Cardiac septum (tissue), 1 donor: ENCODE measurements at regions of chr4 and their contacts with region 1.

Region 1: DNA sequence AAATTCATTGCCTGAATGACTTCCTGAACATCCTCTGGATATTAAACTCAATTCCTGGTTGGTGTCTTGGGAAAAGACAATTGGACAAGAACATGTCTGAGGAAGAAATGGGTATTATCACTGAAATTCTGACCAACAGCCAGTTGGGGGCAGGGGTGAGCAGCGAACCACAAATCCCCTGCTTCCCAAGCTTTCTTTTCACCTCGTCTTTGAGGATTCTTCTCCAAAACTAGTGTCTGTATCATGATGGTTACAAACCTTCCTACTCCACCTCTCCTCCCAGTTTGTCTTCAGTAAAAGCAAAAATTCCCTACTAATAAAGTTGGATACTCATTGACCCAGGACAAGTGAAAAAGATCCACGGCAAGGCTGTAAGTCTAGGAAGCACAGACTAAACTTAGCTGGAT is 48.3 kb upstream of the WDR1 start:
- DNase-seq: no peak

Region 2: DNA sequence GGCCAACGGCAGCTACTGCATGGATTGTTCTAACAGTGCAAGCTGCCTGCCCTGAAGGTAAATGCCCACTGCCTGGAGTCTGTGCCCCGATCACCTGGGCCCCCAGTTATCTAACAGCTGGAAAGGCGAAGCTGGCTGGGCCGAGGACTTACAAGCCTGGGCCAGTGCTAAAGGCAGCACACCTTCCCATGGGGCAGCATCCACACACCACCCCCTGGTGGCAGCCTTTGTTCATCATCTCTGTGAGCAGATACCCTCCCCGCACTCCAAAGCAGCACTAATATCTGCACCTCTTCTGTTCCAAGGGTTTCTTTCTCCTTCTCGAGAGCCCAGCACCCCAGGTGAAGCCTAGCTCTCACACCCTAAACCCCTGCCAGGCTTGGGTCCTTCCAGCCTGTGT is 151.2 kb before region 1 on chr4:
- intact Hi-C with region 1: no loop called
- DNase-seq: peak; percentile 73

Region 3: DNA sequence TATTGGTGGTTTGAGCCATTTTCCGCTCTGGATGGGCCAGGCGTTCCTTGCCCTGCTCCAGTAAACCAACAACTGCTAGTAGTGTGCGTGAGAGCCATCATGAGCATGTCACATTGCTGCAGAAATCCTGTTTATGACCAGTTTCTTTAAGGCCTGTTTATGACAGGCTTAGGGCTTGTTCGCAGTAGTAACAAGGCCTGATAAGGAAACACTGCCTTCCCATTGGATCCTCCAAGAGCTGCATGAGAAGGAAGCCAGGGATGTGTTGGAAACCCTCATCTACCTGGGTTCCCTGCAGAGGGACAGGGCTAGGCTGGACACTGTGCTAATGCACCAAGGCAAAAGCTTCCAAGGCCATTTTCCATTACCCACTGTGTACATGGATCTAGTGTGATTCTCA is 138.4 kb after region 1 on chr4:
- intact Hi-C with region 1: loop called (anchors 5 kb)
- DNase-seq: no peak

Region 4: DNA sequence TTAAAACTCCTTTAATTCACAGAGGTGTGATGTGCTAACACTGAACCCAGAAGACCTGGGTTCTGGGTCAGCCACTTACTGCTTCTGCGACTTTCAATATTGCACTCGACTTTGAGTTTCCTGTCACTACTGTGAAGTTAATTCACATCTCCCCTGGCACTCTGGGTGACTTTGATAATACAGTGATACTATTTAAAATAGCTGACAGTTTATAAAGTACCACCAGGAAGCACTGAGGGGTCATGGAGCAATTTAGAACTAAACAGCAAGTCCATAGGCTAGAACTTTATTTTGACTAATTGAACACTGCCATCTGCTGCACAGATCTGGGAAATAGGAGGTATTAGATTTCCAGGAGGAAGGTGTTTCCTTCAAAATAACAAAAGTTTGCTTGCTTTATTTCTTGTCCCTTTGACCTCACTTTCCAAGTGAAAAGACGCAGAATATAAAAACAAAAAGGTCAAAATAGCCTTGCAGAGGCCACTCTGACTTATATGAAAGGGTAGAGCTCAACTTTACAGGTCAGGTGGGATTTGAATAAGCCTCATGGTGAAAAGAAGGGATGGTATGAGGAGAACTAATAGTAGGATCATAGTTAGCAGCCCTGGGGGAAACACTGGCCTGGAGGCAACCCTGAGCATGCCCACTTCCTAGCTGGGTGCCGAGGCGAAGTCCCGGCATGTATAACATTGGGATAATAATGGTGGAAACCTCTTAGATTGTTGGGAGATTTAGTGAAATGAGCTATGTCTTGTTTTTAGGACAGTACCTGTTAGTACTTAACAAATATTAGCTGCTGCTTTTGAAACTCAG is 239.0 kb after region 1 on chr4:
- intact Hi-C with region 1: loop called (anchors 10 kb)
- DNase-seq: no peak

Region 5: DNA sequence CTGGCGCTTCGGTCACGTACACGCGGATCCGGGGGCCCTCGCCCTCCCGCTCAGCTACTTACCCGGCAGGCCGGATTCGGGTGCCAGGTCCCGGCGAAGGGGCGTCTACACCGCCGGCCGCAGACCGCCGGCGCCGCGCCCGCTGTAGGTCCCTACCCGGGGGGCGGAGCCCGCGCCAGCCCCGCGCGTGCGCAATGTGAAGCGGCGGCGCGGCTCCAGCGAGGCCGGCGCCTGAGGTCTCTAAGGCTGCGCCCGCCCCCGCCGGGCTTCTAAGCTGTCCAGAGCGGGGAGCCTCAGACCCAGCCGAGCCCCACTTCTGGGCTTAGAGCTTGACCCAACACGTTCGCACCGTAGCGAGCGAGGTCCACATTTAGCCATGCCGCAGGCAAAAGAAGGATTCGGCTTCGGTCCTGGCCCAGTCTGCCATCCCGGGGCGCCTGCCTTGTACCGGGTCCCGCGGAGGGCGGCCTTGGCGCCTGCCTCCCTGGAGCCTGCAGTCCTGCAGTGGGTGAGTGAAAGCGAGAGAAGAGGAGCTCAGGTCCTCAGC is 292.4 kb after region 1 on chr4 and contains the start of gene ZNF518B:
- intact Hi-C with region 1: loop called (anchors 5 kb)
- DNase-seq: peak; percentile 87
- total RNA-seq, gene ZNF518B: 22.7 TPM

Region 6: DNA sequence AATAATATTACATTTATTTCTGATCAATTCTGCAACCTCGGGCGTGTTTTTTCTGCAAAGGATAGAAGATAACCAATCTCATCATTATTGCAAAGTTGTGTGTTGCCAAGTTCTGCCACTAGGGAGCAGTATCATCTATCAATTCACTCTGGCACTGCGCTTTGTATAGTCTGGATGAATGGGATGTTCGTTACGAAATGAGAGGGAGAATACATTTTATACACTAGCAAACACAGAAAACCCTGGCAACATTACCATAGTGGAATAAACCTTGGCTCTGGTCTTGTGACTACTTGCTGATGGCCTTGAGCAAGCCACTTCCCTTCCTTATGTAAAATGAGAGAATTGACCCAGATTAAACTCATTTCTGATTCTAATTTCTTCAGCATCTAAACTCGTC is 389.8 kb after region 1 on chr4:
- intact Hi-C with region 1: loop called (anchors 1 kb)
- DNase-seq: no peak